ENCODE measurements at regions of chr3 and their contacts with region 1.

Region 1: DNA sequence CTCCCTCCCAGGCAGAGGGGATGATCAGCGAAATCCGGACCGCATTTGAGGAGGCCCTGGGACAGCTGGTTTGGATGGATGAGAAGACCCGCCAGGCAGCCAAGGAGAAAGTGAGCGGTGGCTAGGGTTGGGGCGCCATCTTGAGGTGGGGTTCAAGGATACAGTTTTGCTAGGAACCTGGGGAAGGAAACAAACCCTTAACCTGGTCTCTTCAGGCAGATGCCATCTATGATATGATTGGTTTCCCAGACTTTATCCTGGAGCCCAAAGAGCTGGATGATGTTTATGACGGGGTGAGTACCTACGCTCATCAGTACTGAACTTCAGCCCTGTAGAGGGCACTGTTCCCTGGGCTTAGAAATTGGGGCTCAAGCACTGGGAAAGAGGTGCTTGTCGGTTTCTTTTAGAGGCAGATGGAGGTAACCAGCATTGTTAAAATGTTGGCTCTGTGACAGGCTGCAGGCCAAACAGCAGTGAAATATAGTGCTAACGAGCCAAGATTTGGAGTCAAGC is 9.6 kb upstream of the PSMD2 start:
- DNase-seq: peak in 8 of 9 donors; percentile 18 to 71 (median 38)
- ATAC-seq: peak; percentile 67
- H3K4me3 ChIP-seq: no peak overlapping the region
- H3K4me3 Mint-ChIP-seq: no peak overlapping the region
- H3K27ac ChIP-seq: no peak overlapping the region
- H3K27ac Mint-ChIP-seq: peak overlapping the region in 1 of 9 donors; percentile 34
- H3K4me1 ChIP-seq: no peaks in the 10 kb centered on the region
- H3K4me1 Mint-ChIP-seq: no peaks in the 10 kb centered on the region
- H3K27me3 ChIP-seq: no peaks in the 10 kb centered on the region
- H3K27me3 Mint-ChIP-seq: peaks cover 9 to 28% (median 11%) of the 10 kb centered on the region in 5 donors

Region 2: DNA sequence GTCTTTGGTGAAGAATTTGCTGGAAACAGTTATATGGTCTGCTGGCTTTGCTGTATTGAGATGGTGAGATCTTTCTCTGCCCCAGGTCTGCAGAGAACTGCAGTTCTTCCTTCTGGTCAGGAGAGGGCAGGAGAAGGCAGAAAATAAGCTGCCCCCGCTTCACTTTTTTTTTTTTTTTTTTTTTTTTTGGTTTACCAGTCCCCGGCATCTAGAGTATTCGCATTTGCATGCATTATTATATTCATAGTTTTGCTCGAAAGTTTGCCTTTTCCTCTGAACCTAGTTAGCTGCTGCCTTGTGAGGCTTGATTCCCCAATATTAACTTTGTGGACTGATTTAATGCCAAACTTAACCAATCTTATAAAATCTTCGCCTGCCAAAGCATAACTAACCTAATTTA is 394.2 kb before region 1 on chr3:
- CTCF ChIA-PET with region 1: interaction called, 3 read pairs
- POLR2A ChIA-PET with region 1: no interaction called
- intact Hi-C with region 1: loop called (anchors 1 kb)
- DNase-seq: peak in 7 of 9 donors; percentile 19 to 67 (median 49)
- ATAC-seq: peak; percentile 91
- H3K4me3 ChIP-seq: no peak overlapping the region
- H3K4me3 Mint-ChIP-seq: no peak overlapping the region
- H3K27ac ChIP-seq: no peak overlapping the region
- H3K27ac Mint-ChIP-seq: peak overlapping the region in 1 of 9 donors; percentile 18
- H3K4me1 ChIP-seq: no peaks in the 10 kb centered on the region
- H3K4me1 Mint-ChIP-seq: peaks cover 0 to 6% (median 0%) of the 10 kb centered on the region in 7 donors
- H3K27me3 ChIP-seq: peaks cover 0 to 3% of the 10 kb centered on the region in 2 donors
- H3K27me3 Mint-ChIP-seq: peaks cover 7 to 29% (median 11%) of the 10 kb centered on the region in 5 donors

Region 3: GRCh38 chr3:184145111-184145524 is 144.4 kb before region 1 on chr3:
- CTCF ChIA-PET with region 1: no interaction called
- POLR2A ChIA-PET with region 1: no interaction called
- intact Hi-C with region 1: loop called in 1 of 2 experiments (anchors 1 kb)
- DNase-seq: peak in 7 of 9 donors; percentile 22 to 50 (median 34)
- ATAC-seq: peak; percentile 77
- H3K4me3 ChIP-seq: no peak overlapping the region
- H3K4me3 Mint-ChIP-seq: no peak overlapping the region
- H3K27ac ChIP-seq: no peak overlapping the region
- H3K27ac Mint-ChIP-seq: peak overlapping the region in 1 of 9 donors; percentile 80
- H3K4me1 ChIP-seq: no peaks in the 10 kb centered on the region
- H3K4me1 Mint-ChIP-seq: peaks cover 0 to 7% (median 0%) of the 10 kb centered on the region in 7 donors
- H3K27me3 ChIP-seq: no peaks in the 10 kb centered on the region
- H3K27me3 Mint-ChIP-seq: no peaks in the 10 kb centered on the region

Region 4: GRCh38 chr3:184229394-184230080 is 59.9 kb before region 1 on chr3 and contains the start of gene VWA5B2:
- CTCF ChIA-PET with region 1: no interaction called
- POLR2A ChIA-PET with region 1: no interaction called
- intact Hi-C with region 1: loop called (anchors 1 kb)
- DNase-seq: peak; percentile 58 to 72 (median 66)
- ATAC-seq: peak; percentile 96
- H3K4me3 ChIP-seq: peak within 1 kb of the TSS; percentile 58
- H3K4me3 Mint-ChIP-seq: peak within 1 kb of the TSS; percentile 41 to 82 (median 74)
- H3K27ac ChIP-seq: no peak within 1 kb of the TSS
- H3K27ac Mint-ChIP-seq: no peak within 1 kb of the TSS
- H3K4me1 ChIP-seq: peaks cover 0 to 5% of the 10 kb centered on the region in 2 donors
- H3K4me1 Mint-ChIP-seq: peaks cover 8 to 14% (median 10%) of the 10 kb centered on the region in 7 donors
- H3K27me3 ChIP-seq: peaks cover 4 to 17% of the 10 kb centered on the region in 2 donors
- H3K27me3 Mint-ChIP-seq: peaks cover 46 to 65% (median 57%) of the 10 kb centered on the region in 5 donors
- total RNA-seq, gene VWA5B2: not detected